CD4-positive, alpha-beta memory T cell (primary cell): ENCODE measurements at regions of chr7 and their contacts with region 1.

Region 1: DNA sequence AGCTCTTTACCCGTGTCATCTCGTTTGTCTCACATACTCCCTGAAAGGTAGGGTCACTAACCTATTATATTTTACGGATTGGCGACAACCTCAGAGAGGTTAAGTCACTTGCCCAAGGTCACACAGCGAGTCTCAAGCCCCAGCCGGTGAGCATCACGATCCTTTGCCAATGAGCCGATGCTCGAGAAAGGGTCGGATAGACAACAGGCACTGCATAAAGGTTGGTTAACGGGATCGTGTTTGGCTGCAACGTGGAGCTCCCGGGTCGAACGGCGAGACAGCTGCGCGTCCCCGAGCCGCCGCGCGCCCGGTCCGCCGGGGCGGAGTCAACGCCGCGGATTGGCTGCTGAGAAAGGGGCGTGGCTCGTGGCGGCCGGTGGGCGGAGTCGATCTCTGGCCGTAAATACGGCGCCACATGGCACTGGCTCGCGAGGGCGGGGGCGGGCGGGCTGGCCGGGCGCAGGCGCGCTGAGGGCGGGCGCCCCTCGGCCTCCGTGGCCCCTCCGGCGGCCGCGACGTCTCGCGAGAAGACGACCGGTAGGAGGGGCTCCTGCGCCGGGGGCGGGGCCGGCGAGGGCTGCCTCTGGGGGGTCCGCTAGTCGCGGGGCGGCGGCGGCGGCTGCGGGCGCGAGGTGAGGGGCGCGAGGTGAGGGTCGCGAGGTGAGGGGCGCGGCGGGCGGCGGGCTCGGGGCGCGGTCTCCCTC is at the start of gene CHST12:
- DNase-seq: peak; percentile 93 to 94 (median 93)
- H3K4me3 ChIP-seq: peak within 1 kb of the TSS; percentile 80 to 91
- H3K4me3 Mint-ChIP-seq: peak within 1 kb of the TSS; percentile 87 to 96 (median 90)
- H3K27ac ChIP-seq: peak within 1 kb of the TSS; percentile 70
- H3K27ac Mint-ChIP-seq: peak within 1 kb of the TSS; percentile 90 to 96 (median 92)
- H3K4me1 ChIP-seq: peaks cover 53% of the 10 kb centered on the region
- H3K4me1 Mint-ChIP-seq: peaks cover 37 to 64% (median 47%) of the 10 kb centered on the region in 4 donors
- H3K27me3 ChIP-seq: no peaks in the 10 kb centered on the region
- H3K27me3 Mint-ChIP-seq: no peaks in the 10 kb centered on the region
- total RNA-seq, gene CHST12: 29.5 to 30.7 TPM

Region 2: GRCh38 chr7:2241580-2242540 is 161.3 kb before region 1 on chr7 and contains the starts of genes MRM2 and NUDT1:
- CTCF ChIA-PET with region 1: no interaction called
- POLR2A ChIA-PET with region 1: no interaction called
- intact Hi-C with region 1: loop called (anchors 5 kb)
- DNase-seq: peak; percentile 41 to 61 (median 43)
- H3K4me3 ChIP-seq: peak within 1 kb of the TSS; percentile 47 to 82
- H3K4me3 Mint-ChIP-seq: peak within 1 kb of the TSS; percentile 92 to 96 (median 93)
- H3K27ac ChIP-seq: peak within 1 kb of the TSS; percentile 72
- H3K27ac Mint-ChIP-seq: peak within 1 kb of the TSS; percentile 77 to 96 (median 94)
- H3K4me1 ChIP-seq: peaks cover 17% of the 10 kb centered on the region
- H3K4me1 Mint-ChIP-seq: peaks cover 4 to 27% (median 17%) of the 10 kb centered on the region in 4 donors
- H3K27me3 ChIP-seq: no peaks in the 10 kb centered on the region
- H3K27me3 Mint-ChIP-seq: no peaks in the 10 kb centered on the region
- total RNA-seq, gene MRM2: 17.4 to 18.1 TPM
- total RNA-seq, gene NUDT1: 20.9 to 21.3 TPM

Region 3: DNA sequence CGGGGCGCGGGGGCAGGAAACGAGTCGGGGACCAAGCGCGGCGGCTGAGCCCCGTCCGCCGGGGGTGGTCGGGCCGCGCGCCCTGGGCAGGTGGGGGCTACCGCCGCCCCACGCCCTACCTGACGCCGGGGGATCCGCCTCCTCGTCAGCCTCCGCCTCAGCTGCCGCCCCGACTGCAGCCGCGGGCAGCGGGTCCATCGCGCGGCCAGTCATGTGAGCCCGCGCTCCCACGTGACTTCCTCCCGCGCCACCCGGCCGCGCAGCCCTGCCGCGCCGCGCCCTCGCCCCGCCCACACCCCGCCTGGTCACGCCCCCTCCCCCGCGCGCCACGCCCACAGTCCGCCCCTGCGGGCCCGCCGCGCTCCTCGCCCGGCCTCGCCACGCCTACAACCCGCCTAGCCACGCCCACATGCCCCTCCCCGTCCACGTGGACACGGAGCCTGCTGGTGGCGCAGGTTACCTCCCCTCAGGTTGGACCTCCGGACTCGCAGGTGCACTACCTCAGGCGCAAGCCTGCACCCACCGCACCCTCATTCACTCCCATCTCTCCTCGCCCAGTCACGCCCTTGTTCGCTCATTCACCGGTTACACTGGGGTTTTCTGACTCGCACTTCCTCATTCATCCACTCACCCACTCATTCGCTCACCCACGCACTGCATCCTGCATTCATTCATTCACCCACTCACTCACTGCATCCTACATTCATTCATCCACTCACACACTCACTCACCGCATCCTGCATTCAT is 88.8 kb before region 1 on chr7 and contains the start of gene SNX8:
- CTCF ChIA-PET with region 1: no interaction called
- POLR2A ChIA-PET with region 1: no interaction called
- intact Hi-C with region 1: loop called (anchors 2 kb)
- DNase-seq: peak; percentile 93 to 98 (median 95)
- H3K4me3 ChIP-seq: peak within 1 kb of the TSS; percentile 57 to 61
- H3K4me3 Mint-ChIP-seq: peak within 1 kb of the TSS; percentile 89 to 96 (median 93)
- H3K27ac ChIP-seq: peak within 1 kb of the TSS; percentile 32
- H3K27ac Mint-ChIP-seq: peak within 1 kb of the TSS; percentile 81 to 94 (median 90)
- H3K4me1 ChIP-seq: peaks cover 8% of the 10 kb centered on the region
- H3K4me1 Mint-ChIP-seq: peaks cover 6 to 20% (median 10%) of the 10 kb centered on the region in 4 donors
- H3K27me3 ChIP-seq: no peaks in the 10 kb centered on the region
- H3K27me3 Mint-ChIP-seq: no peaks in the 10 kb centered on the region
- total RNA-seq, gene SNX8: 6.9 to 9.9 TPM

Region 4: GRCh38 chr7:2417981-2418481 is 14.9 kb after region 1 on chr7:
- CTCF ChIA-PET with region 1: no interaction called
- POLR2A ChIA-PET with region 1: interaction called, 13 read pairs
- intact Hi-C with region 1: no loop called
- DNase-seq: peak; percentile 50 to 82 (median 54)
- H3K4me3 ChIP-seq: peak overlapping the region in 1 of 2 donors; percentile 13
- H3K4me3 Mint-ChIP-seq: peak overlapping the region in 7 of 8 donors; percentile 27 to 78 (median 56)
- H3K27ac ChIP-seq: peak overlapping the region; percentile 13
- H3K27ac Mint-ChIP-seq: peak overlapping the region; percentile 65 to 90 (median 85)
- H3K4me1 ChIP-seq: peaks cover 21% of the 10 kb centered on the region
- H3K4me1 Mint-ChIP-seq: peaks cover 25 to 53% (median 33%) of the 10 kb centered on the region in 4 donors
- H3K27me3 ChIP-seq: no peaks in the 10 kb centered on the region
- H3K27me3 Mint-ChIP-seq: no peaks in the 10 kb centered on the region

Region 5: GRCh38 chr7:2431260-2431867 is 28.2 kb after region 1 on chr7:
- CTCF ChIA-PET with region 1: interaction called, 15 read pairs
- POLR2A ChIA-PET with region 1: interaction called, 3 read pairs
- intact Hi-C with region 1: loop called (anchors 2 kb)
- DNase-seq: peak in 4 of 5 donors; percentile 33 to 53 (median 42)
- H3K4me3 ChIP-seq: no peak overlapping the region
- H3K4me3 Mint-ChIP-seq: no peak overlapping the region
- H3K27ac ChIP-seq: no peak overlapping the region
- H3K27ac Mint-ChIP-seq: peak overlapping the region in 2 of 7 donors; percentile 27 to 30
- H3K4me1 ChIP-seq: no peaks in the 10 kb centered on the region
- H3K4me1 Mint-ChIP-seq: peaks cover 2 to 23% (median 18%) of the 10 kb centered on the region in 4 donors
- H3K27me3 ChIP-seq: no peaks in the 10 kb centered on the region
- H3K27me3 Mint-ChIP-seq: no peaks in the 10 kb centered on the region

Region 6: DNA sequence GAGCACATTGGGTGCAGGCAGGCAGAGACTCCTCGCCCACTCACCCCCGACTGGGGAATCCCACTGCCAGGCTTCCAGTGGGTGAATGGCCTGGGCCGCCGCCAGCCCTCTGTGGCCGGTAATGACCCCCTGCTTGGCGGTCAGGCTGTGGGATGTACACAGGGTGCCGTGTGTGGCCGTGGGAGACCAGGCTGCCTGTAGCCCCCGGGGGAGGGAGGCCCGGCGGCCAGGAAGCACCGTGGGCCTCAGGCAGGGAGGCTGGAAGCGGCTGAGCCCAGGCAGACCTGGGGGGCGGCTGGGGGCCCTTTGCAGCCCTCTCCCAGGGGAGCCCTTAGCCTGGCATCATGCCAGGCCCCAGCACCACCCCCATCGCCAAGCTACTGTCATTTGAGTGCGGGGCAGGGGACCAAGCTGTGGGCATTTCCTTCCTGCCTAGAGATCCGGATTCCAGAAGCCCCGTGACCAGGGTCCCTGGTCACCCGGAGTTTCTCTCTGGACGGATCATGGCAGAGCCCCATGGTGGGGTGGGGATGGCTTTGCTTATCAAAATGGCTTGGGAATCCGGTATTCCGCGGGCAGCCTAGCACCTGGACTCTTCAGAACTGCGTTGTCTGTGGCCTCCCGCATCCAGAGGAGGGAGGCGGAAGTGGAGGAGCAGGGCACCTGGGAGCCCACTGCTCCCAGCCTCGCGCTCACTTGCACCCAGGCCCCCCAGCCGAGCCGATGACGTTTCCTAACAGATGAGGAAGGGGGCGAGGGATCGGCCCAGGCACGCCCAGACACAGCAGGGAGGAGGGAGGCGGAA is 229.8 kb after region 1 on chr7:
- CTCF ChIA-PET with region 1: no interaction called
- POLR2A ChIA-PET with region 1: no interaction called
- intact Hi-C with region 1: loop called (anchors 1 kb)
- DNase-seq: peak in 4 of 5 donors; percentile 15 to 19 (median 18)
- H3K4me3 ChIP-seq: peak overlapping the region; percentile 52 to 82
- H3K4me3 Mint-ChIP-seq: peak overlapping the region; percentile 81 to 89 (median 84)
- H3K27ac ChIP-seq: peak overlapping the region; percentile 63
- H3K27ac Mint-ChIP-seq: peak overlapping the region; percentile 44 to 82 (median 75)
- H3K4me1 ChIP-seq: peaks cover 27% of the 10 kb centered on the region
- H3K4me1 Mint-ChIP-seq: peaks cover 2 to 21% (median 15%) of the 10 kb centered on the region in 4 donors
- H3K27me3 ChIP-seq: no peaks in the 10 kb centered on the region
- H3K27me3 Mint-ChIP-seq: peaks cover 0 to under 1% of the 10 kb centered on the region in 2 donors